ENCODE measurements at regions of chr4 and their contacts with region 1.

Region 1: DNA sequence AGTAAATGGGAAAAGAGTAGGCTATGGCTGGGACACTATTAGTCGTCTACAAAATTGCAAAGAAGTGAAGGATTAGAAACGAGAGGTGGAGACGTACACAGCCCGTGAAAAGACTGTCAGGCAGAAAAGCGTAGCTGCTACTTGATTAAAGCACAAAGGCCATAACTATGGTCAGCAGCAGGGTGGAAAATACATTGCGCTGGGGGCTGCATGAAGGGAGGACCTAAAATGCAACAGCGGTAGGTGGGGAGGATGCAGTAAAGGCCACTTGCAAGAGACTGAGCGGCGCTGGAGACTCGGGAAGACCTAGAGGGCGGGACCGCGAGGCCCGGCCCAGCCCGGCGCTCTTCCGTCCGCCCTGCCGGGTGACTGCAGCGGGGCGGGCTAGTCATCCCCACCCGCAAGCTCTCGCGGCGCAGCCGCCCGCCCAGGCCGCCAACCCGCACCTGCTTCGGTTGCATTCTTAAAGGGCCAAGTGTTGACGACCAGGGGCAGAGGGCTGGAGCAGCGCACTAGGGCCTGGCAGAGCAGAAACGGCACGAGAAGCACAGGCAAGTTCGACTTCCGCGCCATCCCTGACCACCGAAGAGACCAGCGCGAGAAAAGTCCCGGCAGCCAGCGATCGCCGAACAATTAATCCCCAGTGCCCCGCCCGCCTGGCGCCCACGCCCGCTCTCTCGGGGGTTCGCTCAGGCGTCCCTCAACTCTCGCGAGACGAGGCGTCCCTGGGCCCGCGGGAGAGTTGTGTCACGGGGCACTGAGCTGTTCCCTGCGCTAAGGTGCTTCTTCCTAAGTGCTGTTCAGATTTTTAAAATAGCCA is at the start of gene AGA:
- DNase-seq: peak; percentile 92 to 95 (median 93)
- H3K4me3 ChIP-seq: peak within 1 kb of the TSS; percentile 67 to 89 (median 89)
- H3K4me3 Mint-ChIP-seq: peak within 1 kb of the TSS; percentile 89 to 95
- H3K27ac ChIP-seq: peak within 1 kb of the TSS; percentile 89 to 97
- H3K27ac Mint-ChIP-seq: peak within 1 kb of the TSS; percentile 92 to 99 (median 98)
- H3K4me1 ChIP-seq: peaks cover 17 to 21% of the 10 kb centered on the region in 2 donors
- H3K4me1 Mint-ChIP-seq: peaks cover 24% of the 10 kb centered on the region
- H3K27me3 ChIP-seq: no peaks in the 10 kb centered on the region
- H3K27me3 Mint-ChIP-seq: no peaks in the 10 kb centered on the region
- CTCF ChIP-seq: no peak
- polyA plus RNA-seq, gene AGA: 23.0 to 43.1 (median 27.4) TPM

Region 2: GRCh38 chr4:176319704-176320339 is 1122.2 kb before region 1 on chr4 and contains the start of gene SPCS3:
- intact Hi-C with region 1: loop called in 1 of 2 experiments (anchors 10 kb)
- DNase-seq: peak; percentile 95 to 96 (median 96)
- H3K4me3 ChIP-seq: peak within 1 kb of the TSS; percentile 85 to 90 (median 90)
- H3K4me3 Mint-ChIP-seq: peak within 1 kb of the TSS; percentile 83 to 96
- H3K27ac ChIP-seq: peak within 1 kb of the TSS; percentile 93 to 96
- H3K27ac Mint-ChIP-seq: peak within 1 kb of the TSS; percentile 84 to 96 (median 94)
- H3K4me1 ChIP-seq: peaks cover 29 to 52% of the 10 kb centered on the region in 2 donors
- H3K4me1 Mint-ChIP-seq: peaks cover 49% of the 10 kb centered on the region
- H3K27me3 ChIP-seq: no peaks in the 10 kb centered on the region
- H3K27me3 Mint-ChIP-seq: no peaks in the 10 kb centered on the region
- CTCF ChIP-seq: no peak
- polyA plus RNA-seq, gene SPCS3: 50.4 to 112 (median 107) TPM

Region 3: DNA sequence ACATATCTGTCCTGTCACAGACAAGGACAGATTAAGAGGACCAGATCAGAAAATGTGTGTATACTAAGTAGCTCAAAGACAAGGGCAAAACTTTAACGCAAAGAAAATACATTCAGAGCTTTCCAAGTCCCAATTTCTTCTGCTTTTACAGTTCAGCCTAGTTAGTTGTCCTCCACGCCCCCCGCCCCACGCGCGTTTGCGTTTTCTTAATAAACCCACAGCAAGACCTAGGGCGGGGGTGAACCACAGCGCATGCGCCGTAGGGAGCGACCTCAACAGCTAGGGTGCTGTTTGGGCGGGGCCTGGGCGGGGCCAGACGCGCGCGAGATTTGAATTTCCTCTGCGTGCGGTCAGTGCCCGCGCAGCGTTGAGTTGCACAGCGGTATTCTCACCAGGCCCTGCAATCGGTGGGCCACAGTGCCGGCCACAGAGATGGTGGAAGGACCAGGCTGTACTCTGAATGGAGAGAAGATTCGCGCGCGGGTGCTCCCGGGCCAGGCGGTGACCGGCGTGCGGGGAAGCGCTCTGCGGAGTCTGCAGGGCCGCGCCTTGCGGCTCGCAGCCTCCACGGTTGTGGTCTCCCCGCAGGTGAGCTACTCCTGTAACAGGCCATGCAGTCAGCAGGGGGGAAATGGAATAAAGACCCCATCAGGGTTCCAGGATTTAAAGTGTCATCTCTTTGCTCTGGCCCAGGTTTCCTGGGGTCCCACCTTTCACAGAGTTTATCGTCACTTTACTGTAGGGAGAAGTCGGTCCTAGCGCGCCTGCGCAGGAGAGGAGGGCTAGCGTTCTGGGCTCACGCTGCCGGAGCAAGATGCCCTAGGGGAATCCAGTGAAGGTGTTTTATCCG is 132.3 kb before region 1 on chr4 and contains the start of gene NEIL3:
- intact Hi-C with region 1: loop called (anchors 5 to 10 kb)
- DNase-seq: peak; percentile 89 to 94 (median 93)
- H3K4me3 ChIP-seq: peak within 1 kb of the TSS; percentile 83 to 100 (median 98)
- H3K4me3 Mint-ChIP-seq: peak within 1 kb of the TSS; percentile 96 to 98
- H3K27ac ChIP-seq: peak within 1 kb of the TSS in 1 of 2 donors; percentile 76
- H3K27ac Mint-ChIP-seq: peak within 1 kb of the TSS; percentile 82 to 94 (median 91)
- H3K4me1 ChIP-seq: peaks cover 36 to 57% of the 10 kb centered on the region in 2 donors
- H3K4me1 Mint-ChIP-seq: peaks cover 54% of the 10 kb centered on the region
- H3K27me3 ChIP-seq: no peaks in the 10 kb centered on the region
- H3K27me3 Mint-ChIP-seq: peaks cover 0 to 3% (median 1%) of the 10 kb centered on the region in 3 donors
- CTCF ChIP-seq: no peak
- polyA plus RNA-seq, gene NEIL3: 0.70 to 0.85 TPM in 2 of 3 donors, not detected in the other

Measured in CD14-positive monocyte (primary cell).